ENCODE measurements at regions of chr1 and their contacts with region 1.

Region 1: DNA sequence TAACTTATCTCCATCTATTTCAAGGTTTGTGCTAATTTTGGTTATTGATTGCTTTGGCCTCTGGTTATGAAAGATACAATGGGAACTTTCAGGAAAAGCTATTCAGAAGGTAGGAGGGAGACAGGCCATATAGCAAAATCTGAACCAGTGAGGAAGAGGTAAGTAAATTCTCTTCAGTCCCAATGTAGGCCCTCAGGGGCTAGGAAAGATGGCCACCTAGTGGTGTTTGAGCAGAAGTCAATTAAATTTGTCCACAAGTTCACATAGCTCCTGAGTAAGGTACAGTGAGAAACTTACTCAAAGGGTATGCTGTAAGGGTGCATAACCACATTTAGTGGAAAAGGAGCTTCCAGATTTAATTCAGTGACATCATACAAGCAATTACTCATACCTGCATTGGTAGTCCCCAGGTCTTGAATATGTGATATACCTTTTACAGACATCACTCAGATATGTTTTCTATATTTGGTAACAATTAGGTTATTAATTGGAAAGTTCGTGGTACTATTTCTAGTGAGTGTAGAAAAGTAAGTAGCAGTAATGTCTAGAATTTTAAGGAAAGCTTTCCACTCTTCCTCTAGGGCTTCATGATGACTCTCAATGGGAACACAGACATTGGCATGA is 21.4 kb upstream of the FMO1 start:
- DNase-seq: peak; percentile 21
- H3K4me3 ChIP-seq: no peak overlapping the region
- CTCF ChIP-seq: peak; percentile 70

Region 2: GRCh38 chr1:171061425-171062143 is 165.3 kb before region 1 on chr1:
- CTCF ChIA-PET with region 1: no interaction called
- POLR2A ChIA-PET with region 1: no interaction called
- DNase-seq: no peak
- H3K4me3 ChIP-seq: no peak overlapping the region
- CTCF ChIP-seq: no peak

Region 3: DNA sequence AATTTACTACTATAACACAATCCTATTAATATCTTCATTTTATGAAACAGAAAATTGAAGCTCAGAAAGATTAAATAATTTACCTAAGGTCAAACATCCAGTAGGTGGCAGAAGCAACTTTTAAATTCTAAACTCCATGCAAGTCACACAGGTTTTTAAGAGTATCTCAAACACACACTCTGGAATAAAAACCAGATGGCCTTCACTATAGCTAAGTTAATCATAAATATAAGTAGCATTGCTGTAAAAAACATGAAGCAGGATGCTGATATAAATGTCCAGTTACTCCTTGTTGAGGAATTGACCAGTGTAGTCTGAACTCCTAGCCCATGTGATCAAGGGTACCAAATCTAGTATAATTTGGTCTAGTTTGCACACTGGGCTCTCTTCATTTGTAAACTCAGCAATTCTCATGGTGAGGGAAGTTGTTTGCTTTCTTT is 145.5 kb before region 1 on chr1:
- CTCF ChIA-PET with region 1: interaction called, 52 read pairs
- POLR2A ChIA-PET with region 1: no interaction called
- DNase-seq: peak; percentile 4
- H3K4me3 ChIP-seq: no peak overlapping the region
- CTCF ChIP-seq: no peak

Region 4: DNA sequence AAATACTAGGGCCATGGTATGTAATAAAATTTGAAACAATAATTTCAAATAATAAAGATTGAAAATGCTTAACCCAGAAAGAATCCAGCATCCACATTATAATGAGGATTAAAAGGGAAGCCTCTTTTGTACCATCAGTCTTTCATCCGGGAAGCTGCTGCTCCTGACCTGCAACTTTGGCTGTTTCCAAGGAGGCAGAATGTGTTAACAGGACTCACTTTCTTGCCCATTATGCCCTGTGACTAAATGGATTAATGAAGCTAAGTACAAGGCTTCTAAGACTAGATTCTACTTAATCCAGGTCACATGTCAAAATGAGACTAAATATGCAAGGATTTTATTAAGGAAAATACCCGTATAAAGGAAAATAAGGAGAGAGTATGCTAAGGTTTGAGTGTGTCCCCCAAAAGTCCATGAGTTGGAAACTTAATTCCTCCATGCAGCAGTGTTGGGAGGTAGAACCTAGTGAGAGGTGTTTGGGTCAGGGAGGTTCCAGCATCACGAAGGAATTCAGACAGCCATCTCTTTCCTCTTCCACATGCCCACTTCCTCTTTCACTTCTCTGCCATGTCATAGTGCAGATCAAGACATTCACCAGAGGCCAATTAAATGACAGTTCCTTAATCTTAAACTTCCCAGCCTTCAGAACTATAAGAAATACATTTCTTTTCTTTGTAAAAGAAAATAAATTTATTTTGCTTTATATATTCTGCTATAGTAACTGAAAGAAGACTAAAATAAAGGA is 14.1 kb before region 1 on chr1:
- CTCF ChIA-PET with region 1: interaction called, 11 read pairs
- POLR2A ChIA-PET with region 1: no interaction called
- DNase-seq: no peak
- H3K4me3 ChIP-seq: no peak overlapping the region
- CTCF ChIP-seq: no peak

Region 5: GRCh38 chr1:171245458-171246064 is 18.7 kb after region 1 on chr1:
- CTCF ChIA-PET with region 1: interaction called, 21 read pairs
- POLR2A ChIA-PET with region 1: no interaction called
- DNase-seq: no peak
- H3K4me3 ChIP-seq: no peak overlapping the region
- CTCF ChIP-seq: peak; percentile 67

Measured in AG04449 (cell line).